CD4-positive, alpha-beta memory T cell (primary cell): ENCODE measurements at regions of chr1 and their contacts with region 1.

Region 1: DNA sequence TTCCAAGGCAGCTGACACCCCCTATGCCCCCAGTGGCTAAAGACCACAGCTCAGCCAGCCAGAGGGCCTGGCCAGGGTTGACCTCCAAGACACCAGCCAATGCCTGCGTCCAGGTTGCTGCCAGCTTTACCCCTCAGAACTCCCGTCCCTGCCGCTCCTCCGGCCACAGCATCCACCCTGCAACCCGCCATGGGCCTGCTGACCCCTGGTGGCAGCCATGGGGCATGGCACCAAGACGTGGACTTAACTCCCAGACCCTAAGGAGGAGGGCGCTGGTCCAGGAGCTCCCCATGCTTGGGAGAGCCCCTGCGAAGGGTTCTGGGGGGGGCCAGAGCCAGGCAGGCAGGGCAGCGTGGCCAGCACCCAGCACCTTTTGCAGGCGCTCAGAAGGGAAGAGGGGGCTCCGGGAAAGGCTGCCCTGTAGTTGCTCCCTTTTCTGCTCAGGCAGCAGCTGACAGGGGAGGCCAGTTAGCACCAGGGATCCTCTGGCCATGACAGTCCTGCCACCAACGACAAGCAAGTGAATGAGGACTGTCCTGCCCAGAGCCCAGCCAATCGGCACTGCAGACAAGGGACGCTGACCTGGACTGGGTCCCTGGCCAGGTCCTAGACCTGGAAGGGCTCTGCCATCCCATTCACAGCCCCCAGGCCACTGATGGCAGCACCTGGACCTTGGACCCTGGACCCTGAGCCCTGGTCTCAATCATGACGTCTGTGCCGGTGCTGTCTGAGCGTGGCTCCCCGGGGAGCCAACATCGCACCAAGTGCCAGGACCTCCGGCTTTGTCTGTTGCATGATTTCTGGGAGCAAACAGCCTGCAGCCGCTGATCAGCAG is 246.2 kb downstream of the NPHP4 start:
- DNase-seq: peak; percentile 38 to 48 (median 43)
- H3K4me3 ChIP-seq: no peak overlapping the region
- H3K4me3 Mint-ChIP-seq: no peak overlapping the region
- H3K27ac ChIP-seq: no peak overlapping the region
- H3K27ac Mint-ChIP-seq: no peak overlapping the region
- H3K4me1 ChIP-seq: no peaks in the 10 kb centered on the region
- H3K4me1 Mint-ChIP-seq: peaks cover 0 to 8% (median 1%) of the 10 kb centered on the region in 4 donors
- H3K27me3 ChIP-seq: no peaks in the 10 kb centered on the region
- H3K27me3 Mint-ChIP-seq: peaks cover 12 to 20% of the 10 kb centered on the region in 2 donors

Region 2: GRCh38 chr1:4652631-4653327 is 1093.2 kb before region 1 on chr1:
- CTCF ChIA-PET with region 1: interaction called, 3 read pairs
- POLR2A ChIA-PET with region 1: no interaction called
- intact Hi-C with region 1: loop called (anchors 2 kb)
- DNase-seq: peak in 4 of 5 donors; percentile 34 to 45 (median 40)
- H3K4me3 ChIP-seq: no peak overlapping the region
- H3K4me3 Mint-ChIP-seq: no peak overlapping the region
- H3K27ac ChIP-seq: no peak overlapping the region
- H3K27ac Mint-ChIP-seq: no peak overlapping the region
- H3K4me1 ChIP-seq: peaks cover 7% of the 10 kb centered on the region
- H3K4me1 Mint-ChIP-seq: peaks cover 2 to 9% (median 5%) of the 10 kb centered on the region in 4 donors
- H3K27me3 ChIP-seq: peaks cover 6% of the 10 kb centered on the region
- H3K27me3 Mint-ChIP-seq: peaks cover 17 to 23% of the 10 kb centered on the region in 2 donors

Region 3: DNA sequence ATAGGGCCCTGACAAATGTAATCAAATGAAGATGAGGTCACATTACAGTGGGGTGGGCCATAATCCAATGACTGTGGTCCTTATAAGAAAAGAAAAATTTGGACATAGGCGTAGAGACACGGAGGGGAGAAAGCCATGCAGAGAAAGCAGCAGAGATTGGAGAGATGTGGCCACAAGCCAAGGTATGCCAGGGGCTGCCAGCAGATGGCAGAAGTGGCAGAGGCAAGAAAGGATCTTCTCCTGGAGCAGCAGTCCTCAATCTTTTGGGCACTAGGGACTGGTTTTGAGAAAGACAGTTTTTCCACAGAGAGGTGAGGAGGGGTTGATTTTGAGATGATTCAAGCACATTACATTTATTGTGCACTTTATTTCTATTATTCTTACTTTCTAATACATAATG is 108.8 kb before region 1 on chr1:
- CTCF ChIA-PET with region 1: interaction called, 35 read pairs
- POLR2A ChIA-PET with region 1: no interaction called
- intact Hi-C with region 1: no loop called
- DNase-seq: peak in 4 of 5 donors; percentile 20 to 22 (median 22)
- H3K4me3 ChIP-seq: no peak overlapping the region
- H3K4me3 Mint-ChIP-seq: no peak overlapping the region
- H3K27ac ChIP-seq: no peak overlapping the region
- H3K27ac Mint-ChIP-seq: peak overlapping the region in 1 of 7 donors; percentile 60
- H3K4me1 ChIP-seq: no peaks in the 10 kb centered on the region
- H3K4me1 Mint-ChIP-seq: peaks cover 0 to 5% (median 4%) of the 10 kb centered on the region in 4 donors
- H3K27me3 ChIP-seq: no peaks in the 10 kb centered on the region
- H3K27me3 Mint-ChIP-seq: peaks cover 9 to 25% of the 10 kb centered on the region in 2 donors